ENCODE measurements at regions of chr9 and their contacts with region 1.

Region 1: DNA sequence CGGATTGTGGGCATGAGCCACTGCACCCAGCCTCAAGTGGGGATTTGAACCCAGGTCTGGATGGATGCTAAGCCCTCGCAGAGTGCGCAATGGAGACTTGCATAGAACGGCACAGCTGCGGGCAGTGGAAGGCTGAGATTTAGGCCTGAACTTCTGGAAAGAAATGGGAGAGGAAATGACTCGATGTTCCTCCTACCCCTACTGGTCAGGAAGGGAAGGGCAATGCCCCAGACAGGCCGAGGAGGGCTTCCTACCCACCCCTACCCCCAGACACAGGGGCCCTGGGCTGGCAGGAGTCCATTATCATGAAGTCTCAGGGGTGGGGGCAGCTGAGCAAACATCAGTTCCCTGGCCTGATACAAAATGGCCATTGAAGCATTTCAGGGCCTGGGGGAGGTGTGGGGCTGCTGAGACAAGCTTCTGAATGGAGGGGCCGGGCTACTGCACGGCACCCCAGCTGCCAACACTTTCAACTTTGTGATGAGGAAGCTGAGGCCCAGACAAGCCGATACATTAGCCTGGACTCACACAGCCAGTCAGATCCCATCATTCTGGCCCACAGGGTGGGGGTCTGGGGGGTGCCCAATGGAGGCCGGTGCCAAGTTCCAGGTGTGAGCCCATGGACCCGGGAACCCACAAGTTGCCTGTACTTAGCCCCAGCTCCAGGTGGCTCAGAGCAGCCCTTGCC is 13.5 kb upstream of the WDR38 start:
- DNase-seq: no peak
- H3K4me3 ChIP-seq: no peak overlapping the region
- H3K27ac ChIP-seq: no peak overlapping the region
- H3K4me1 ChIP-seq: peaks cover 19% of the 10 kb centered on the region
- H3K27me3 ChIP-seq: no peaks in the 10 kb centered on the region
- CTCF ChIP-seq: peak; percentile 64

Region 2: GRCh38 chr9:124818431-124819281 is 21.1 kb before region 1 on chr9:
- CTCF ChIA-PET with region 1: interaction called, 5 read pairs
- POLR2A ChIA-PET with region 1: interaction called, 5 read pairs
- intact Hi-C with region 1: loop called (anchors 2 kb)
- DNase-seq: peak; percentile 95 to 99
- H3K4me3 ChIP-seq: peak overlapping the region; percentile 16; the same call in 1 of the 2 replicates
- H3K27ac ChIP-seq: peak overlapping the region; percentile 79
- H3K4me1 ChIP-seq: peaks cover 31% of the 10 kb centered on the region
- H3K27me3 ChIP-seq: no peaks in the 10 kb centered on the region
- CTCF ChIP-seq: no peak